ENCODE measurements at regions of chr1 and their contacts with region 1.

Region 1: DNA sequence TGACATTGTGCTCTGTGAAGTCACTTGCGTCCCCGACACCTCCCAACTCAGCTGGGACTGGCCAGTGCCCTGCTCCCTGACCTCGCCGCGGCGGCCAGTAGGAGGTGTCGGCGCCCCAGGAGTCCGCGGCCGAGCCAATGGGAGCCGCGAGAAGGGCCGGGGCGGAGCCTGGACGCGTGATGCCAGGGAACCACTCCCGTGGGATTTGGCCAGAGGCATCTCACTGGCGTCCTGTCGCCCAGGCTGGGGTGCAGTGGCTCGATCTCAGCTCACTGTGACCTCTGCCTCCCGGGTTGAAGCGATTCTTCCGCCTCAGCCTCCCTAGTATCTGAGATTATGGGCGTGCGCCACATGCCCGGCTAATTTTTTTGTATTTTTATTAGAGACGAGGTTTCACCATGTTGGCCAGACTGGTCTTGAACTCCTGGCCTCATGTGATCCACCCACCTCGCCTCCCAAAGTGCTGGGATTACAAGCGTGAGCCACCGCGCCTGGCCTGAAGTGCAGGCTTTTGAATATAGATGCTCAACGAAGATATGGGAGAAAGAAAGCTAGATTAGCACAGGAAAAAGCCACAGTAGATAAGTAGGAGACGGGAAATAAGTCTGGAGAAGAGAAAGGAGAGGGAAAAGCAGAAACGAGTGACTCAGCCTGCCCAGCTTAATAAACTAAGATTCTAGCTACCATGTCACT is 38.0 kb downstream of the ZBTB8OS start:
- DNase-seq: peak; percentile 23 to 96
- H3K4me3 ChIP-seq: peak overlapping the region; percentile 32 to 72 (median 53)
- H3K27ac ChIP-seq: no peak overlapping the region
- H3K4me1 ChIP-seq: no peaks in the 10 kb centered on the region; a peak in 1 of 7 replicates
- H3K27me3 ChIP-seq: no peaks in the 10 kb centered on the region
- CTCF ChIP-seq: peak in 1 of 3 experiments; percentile 7; a peak in 1 of 4 replicates
- EP300 ChIP-seq: no peak
- POLR2A ChIP-seq: peak in 1 of 2 experiments; percentile 85; a peak in 2 of 3 replicates
- RAD21 ChIP-seq: peak in 1 of 2 experiments; percentile 6; a peak in 1 of 4 replicates

Region 2: DNA sequence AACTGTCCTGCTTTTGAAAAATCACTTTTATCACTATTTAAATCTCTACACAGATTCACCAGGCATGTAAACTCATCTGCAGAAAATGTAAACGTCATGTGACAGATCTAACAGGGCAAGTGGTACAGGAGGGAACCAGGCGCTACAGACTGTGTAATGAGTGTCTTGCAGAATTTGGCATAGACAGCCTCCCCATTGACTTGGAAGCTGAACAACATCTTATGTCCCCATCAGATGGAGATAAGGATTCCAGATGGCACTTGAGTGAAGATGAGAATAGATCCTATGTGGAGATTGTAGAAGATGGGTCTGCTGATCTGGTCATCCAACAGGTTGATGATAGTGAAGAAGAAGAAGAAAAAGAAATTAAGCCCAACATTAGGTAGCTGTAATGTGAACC is 12.3 kb before region 1 on chr1:
- CTCF ChIA-PET with region 1: interaction called, 18 read pairs
- POLR2A ChIA-PET with region 1: interaction called, 3 read pairs
- DNase-seq: no peak
- H3K4me3 ChIP-seq: no peak overlapping the region
- H3K27ac ChIP-seq: no peak overlapping the region
- H3K4me1 ChIP-seq: no peaks in the 10 kb centered on the region
- H3K27me3 ChIP-seq: no peaks in the 10 kb centered on the region
- CTCF ChIP-seq: no peak
- EP300 ChIP-seq: no peak
- POLR2A ChIP-seq: no peak
- RAD21 ChIP-seq: no peak